Activated CD4-positive, alpha-beta T cell treated with anti-CD3 and anti-CD28 coated beads, Interleukin-2, amount 10 ng/mL, durations not matched to agents 24 days and 14 days (primary cell): ENCODE measurements at regions of chr18 and their contacts with region 1.

Region 1: GRCh38 chr18:48675352-48675761 is 136.5 kb downstream of the CTIF start:
- DNase-seq: peak; percentile 95
- H3K4me3 Mint-ChIP-seq: no peak overlapping the region
- H3K27ac Mint-ChIP-seq: no peak overlapping the region
- H3K4me1 Mint-ChIP-seq: peaks cover 2% of the 10 kb centered on the region
- H3K27me3 Mint-ChIP-seq: no peaks in the 10 kb centered on the region

Region 2: DNA sequence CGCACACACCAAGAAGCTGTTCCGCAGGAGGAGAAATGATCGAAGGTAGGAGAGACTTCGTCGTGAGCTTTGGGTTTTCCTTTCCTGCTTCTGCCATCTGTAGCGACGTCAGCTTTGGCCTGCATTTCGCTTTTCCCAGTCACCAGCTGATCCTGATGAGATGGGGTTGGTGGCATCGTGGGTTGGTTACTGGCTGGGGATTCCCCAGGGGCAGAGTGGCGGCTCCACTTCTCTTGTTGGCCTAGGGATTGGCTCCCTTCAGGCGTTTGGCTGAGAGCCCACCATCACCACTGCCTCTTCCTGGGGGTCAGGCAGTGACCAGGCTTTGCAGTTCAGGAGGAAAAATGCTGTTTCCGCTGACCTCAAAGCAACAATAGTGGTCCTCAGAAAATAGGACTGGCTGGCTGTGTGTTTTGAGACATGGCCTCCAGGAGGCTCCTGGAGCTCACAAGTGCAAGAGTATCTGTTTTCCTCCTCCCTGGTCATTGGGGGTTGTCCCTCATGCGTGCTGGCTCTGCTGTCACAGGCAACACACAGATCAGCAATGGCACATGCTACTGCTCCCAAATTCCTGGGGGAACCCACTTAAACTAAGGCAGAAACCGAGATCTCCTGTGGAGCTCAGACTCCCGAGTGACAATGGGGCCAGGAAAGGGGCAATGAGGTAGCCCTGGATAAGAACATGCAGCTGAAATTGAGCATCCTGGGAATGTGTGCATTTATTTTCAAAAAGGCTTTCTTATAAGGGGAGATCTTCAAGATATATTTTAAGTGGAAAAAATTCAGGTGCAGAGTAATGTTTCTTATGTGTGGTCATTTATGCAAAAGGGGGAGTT is 36.5 kb after region 1 on chr18:
- intact Hi-C with region 1: no loop called
- DNase-seq: peak; percentile 64
- H3K4me3 Mint-ChIP-seq: no peak overlapping the region
- H3K27ac Mint-ChIP-seq: no peak overlapping the region
- H3K4me1 Mint-ChIP-seq: no peaks in the 10 kb centered on the region
- H3K27me3 Mint-ChIP-seq: peaks cover 2% of the 10 kb centered on the region

Region 3: DNA sequence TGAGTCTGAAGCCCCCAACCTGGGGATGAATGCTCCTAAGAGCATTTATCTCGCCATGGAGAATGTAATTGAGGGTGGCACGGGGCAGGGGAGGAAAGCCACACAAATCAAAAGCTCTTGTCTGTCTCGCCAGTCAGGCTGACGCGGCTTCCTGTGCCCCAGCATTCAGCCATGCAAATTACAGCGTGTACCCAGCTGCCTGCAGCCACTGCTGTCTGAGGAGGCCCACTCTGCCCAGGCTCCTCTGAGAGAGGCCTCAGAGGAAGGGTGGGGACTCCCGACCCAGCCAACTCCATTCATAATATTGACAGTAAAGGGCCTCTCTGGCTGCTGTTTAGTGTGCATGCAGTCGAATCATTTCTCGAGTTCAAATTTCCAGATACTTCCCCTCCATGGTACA is 253.4 kb after region 1 on chr18:
- intact Hi-C with region 1: loop called (anchors 10 kb)
- DNase-seq: peak; percentile 89
- H3K4me3 Mint-ChIP-seq: peak overlapping the region; percentile 84
- H3K27ac Mint-ChIP-seq: peak overlapping the region; percentile 89
- H3K4me1 Mint-ChIP-seq: peaks cover 89% of the 10 kb centered on the region
- H3K27me3 Mint-ChIP-seq: no peaks in the 10 kb centered on the region

Region 4: GRCh38 chr18:49021433-49022129 is 346.2 kb after region 1 on chr18:
- intact Hi-C with region 1: loop called (anchors 2 kb)
- DNase-seq: peak; percentile 85
- H3K4me3 Mint-ChIP-seq: no peak overlapping the region
- H3K27ac Mint-ChIP-seq: no peak overlapping the region
- H3K4me1 Mint-ChIP-seq: peaks cover 3% of the 10 kb centered on the region
- H3K27me3 Mint-ChIP-seq: no peaks in the 10 kb centered on the region

Region 5: GRCh38 chr18:49238433-49239042 is 563.2 kb after region 1 on chr18:
- intact Hi-C with region 1: loop called (anchors 5 kb)
- DNase-seq: peak; percentile 73
- H3K4me3 Mint-ChIP-seq: no peak overlapping the region
- H3K27ac Mint-ChIP-seq: no peak overlapping the region
- H3K4me1 Mint-ChIP-seq: peaks cover 5% of the 10 kb centered on the region
- H3K27me3 Mint-ChIP-seq: no peaks in the 10 kb centered on the region

Region 6: GRCh38 chr18:49412679-49413078 is 737.3 kb after region 1 on chr18:
- intact Hi-C with region 1: loop called (anchors 1 kb)
- DNase-seq: no peak
- H3K4me3 Mint-ChIP-seq: peak overlapping the region; percentile 42
- H3K27ac Mint-ChIP-seq: peak overlapping the region; percentile 66
- H3K4me1 Mint-ChIP-seq: peaks cover 29% of the 10 kb centered on the region
- H3K27me3 Mint-ChIP-seq: no peaks in the 10 kb centered on the region

Region 7: DNA sequence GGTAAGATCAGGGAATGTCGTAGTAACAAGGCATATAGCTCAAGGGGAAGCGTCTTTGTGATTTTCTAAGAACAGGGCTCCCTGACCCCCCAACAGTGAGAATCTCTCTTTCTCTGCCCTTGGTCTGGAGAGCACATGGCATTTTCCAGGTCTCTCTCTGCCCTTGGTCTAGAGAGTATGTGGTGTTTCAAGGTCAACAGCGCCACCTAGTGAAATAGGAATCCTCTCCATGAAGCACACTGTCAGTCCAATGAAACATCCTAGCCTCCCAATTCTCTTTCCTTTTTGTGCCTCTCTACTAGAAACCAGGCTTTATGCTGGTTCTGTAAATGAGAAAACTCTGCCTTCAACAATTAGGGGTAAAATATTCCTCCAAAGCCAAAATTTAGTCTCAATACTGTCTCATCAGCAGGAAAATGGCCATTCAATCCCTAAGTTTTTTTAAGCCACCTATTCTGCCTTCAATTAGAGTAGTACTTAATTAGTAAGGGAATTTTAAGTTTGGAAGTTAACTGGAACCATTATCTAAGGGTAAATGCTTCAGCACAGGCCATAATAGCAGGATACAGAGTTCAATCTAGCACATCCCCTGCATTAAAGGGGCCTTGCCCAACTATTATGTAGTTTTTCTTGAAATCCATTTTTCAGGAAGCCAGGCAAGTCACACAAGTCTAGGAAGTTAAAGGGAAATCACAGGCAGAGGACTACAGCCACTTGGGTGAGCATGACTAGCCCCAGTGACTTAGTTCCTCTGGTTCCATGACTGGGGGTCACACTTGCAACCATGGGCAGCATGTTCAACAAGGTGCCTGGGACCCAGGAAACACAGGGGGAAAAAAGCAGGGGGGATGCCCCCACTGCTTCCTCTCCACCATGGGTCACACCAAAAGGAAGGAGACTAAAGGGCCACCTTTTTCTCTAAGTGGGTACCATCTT is 772.7 kb after region 1 on chr18:
- intact Hi-C with region 1: loop called (anchors 1 kb)
- DNase-seq: peak; percentile 86
- H3K4me3 Mint-ChIP-seq: no peak overlapping the region
- H3K27ac Mint-ChIP-seq: no peak overlapping the region
- H3K4me1 Mint-ChIP-seq: peaks cover 14% of the 10 kb centered on the region
- H3K27me3 Mint-ChIP-seq: no peaks in the 10 kb centered on the region